Motor neuron (in vitro differentiated cells): ENCODE measurements at regions of chr12 and their contacts with region 1.

Region 1: GRCh38 chr12:111766608-111767361 is at the start of gene ALDH2:
- ATAC-seq: peak; percentile 71 to 97 (median 95)
- H3K4me3 ChIP-seq: peak within 1 kb of the TSS; percentile 53 to 91 (median 64)
- H3K27ac ChIP-seq: peak within 1 kb of the TSS; percentile 73 to 77
- H3K4me1 ChIP-seq: peaks cover 11 to 12% of the 10 kb centered on the region in 2 donors
- total RNA-seq, gene ALDH2: 13.2 to 45.3 (median 27.0) TPM

Region 2: GRCh38 chr12:111812881-111813741 is 46.3 kb after region 1 on chr12:
- in situ Hi-C with region 1: loop called in 1 of 9 experiments (anchors 10 kb)
- ATAC-seq: peak; percentile 73 to 97 (median 86)
- H3K4me3 ChIP-seq: no peak overlapping the region
- H3K27ac ChIP-seq: no peak overlapping the region
- H3K4me1 ChIP-seq: peaks cover 0 to 2% of the 10 kb centered on the region in 2 donors